Brain microvascular endothelial cell (primary cell): ENCODE measurements at regions of chr7 and their contacts with region 1.

Region 1: DNA sequence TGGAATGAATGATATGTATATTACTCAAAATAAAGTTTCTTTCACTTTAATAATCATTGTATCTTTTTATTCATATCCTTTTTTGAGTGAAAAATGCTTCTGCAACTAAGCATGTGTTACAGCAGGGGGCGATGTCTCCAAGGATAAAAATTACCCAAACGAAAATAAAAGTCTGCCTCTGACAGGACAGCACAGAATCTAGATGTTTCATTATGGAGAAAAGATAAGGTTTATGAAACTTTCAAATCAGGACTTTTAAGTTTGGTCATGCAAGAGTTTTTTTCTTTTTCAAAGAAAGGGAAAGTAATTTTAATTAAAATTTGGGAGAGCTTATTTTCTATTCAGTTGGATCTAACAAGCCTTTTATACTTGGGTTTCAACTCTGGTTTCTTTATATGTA is 48.4 kb downstream of the TES start:
- DNase-seq: peak; percentile 40
- H3K4me3 ChIP-seq: no peak overlapping the region
- H3K27ac ChIP-seq: peak overlapping the region; percentile 18
- H3K27me3 ChIP-seq: no peaks in the 10 kb centered on the region
- CTCF ChIP-seq: peak; percentile 68

Region 2: GRCh38 chr7:116588641-116589594 is 330.2 kb after region 1 on chr7:
- in situ Hi-C with region 1: loop called (anchors 25 kb)
- DNase-seq: peak; percentile 44
- H3K4me3 ChIP-seq: no peak overlapping the region
- H3K27ac ChIP-seq: peak overlapping the region; percentile 52
- H3K27me3 ChIP-seq: no peaks in the 10 kb centered on the region
- CTCF ChIP-seq: peak; percentile 17